ENCODE measurements at regions of chrX and their contacts with region 1.

Region 1: GRCh38 chrX:53587795-53588420 is 98.6 kb downstream of the HUWE1 start:
- DNase-seq: no peak
- H3K4me3 ChIP-seq: no peak overlapping the region
- H3K27ac ChIP-seq: no peak overlapping the region
- H3K27me3 ChIP-seq: peaks cover 0 to 76% (median 20%) of the 10 kb centered on the region in 45 donors
- CTCF ChIP-seq: no peak

Region 2: DNA sequence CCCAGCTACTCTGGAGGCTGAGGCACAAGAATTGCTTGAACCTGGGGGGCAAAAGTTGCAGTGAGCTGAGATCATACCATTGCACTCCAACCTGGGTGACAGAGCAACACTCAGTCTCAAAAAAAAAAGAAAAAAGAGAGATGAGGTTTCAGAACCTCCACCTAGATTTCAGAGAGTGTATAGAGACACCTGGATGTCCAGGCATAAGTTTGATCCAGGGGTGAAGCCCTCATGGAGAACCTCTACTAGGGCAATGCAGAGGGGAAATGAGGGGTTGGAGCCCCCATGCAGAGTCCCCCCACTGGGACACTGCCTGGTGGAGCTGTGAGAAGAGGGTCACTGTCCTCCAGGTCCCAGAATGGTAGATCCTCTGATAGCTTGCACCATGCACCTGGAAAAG is 60.9 kb before region 1 on chrX:
- intact Hi-C with region 1: no loop called
- DNase-seq: no peak
- H3K4me3 ChIP-seq: no peak overlapping the region
- H3K27ac ChIP-seq: no peak overlapping the region
- H3K27me3 ChIP-seq: peaks cover 0 to 36% (median 7%) of the 10 kb centered on the region in 45 donors
- CTCF ChIP-seq: no peak

Region 3: GRCh38 chrX:53683556-53684414 is 95.9 kb after region 1 on chrX:
- intact Hi-C with region 1: loop called in 1 of 2 experiments (anchors 10 kb)
- DNase-seq: peak; percentile 82 to 97 (median 93)
- H3K4me3 ChIP-seq: peak overlapping the region; percentile 38 to 78 (median 67)
- H3K27ac ChIP-seq: peak overlapping the region in 58 of 59 donors; percentile 21 to 90 (median 84)
- H3K27me3 ChIP-seq: peaks cover 0 to 16% (median 0%) of the 10 kb centered on the region in 45 donors
- CTCF ChIP-seq: peak in 35 of 56 donors; percentile 10 to 57 (median 27)